ENCODE measurements at regions of chr16 and their contacts with region 1.

Region 1: GRCh38 chr16:67660564-67661028 is at the start of gene PARD6A:
- DNase-seq: peak; percentile 99
- H3K4me3 Mint-ChIP-seq: peak within 1 kb of the TSS; percentile 92
- H3K27ac Mint-ChIP-seq: peak within 1 kb of the TSS; percentile 96
- H3K4me1 Mint-ChIP-seq: peaks cover 23% of the 10 kb centered on the region
- H3K27me3 Mint-ChIP-seq: no peaks in the 10 kb centered on the region
- total RNA-seq, gene PARD6A: 13.5 and 14.0 TPM in 2 replicates

Region 2: GRCh38 chr16:67226804-67227557 is 433.6 kb before region 1 on chr16 and contains the start of gene TMEM208:
- intact Hi-C with region 1: loop called (anchors 2 kb)
- DNase-seq: peak; percentile 100
- H3K4me3 Mint-ChIP-seq: peak within 1 kb of the TSS; percentile 98
- H3K27ac Mint-ChIP-seq: peak within 1 kb of the TSS; percentile 98
- H3K4me1 Mint-ChIP-seq: peaks cover 43% of the 10 kb centered on the region
- H3K27me3 Mint-ChIP-seq: no peaks in the 10 kb centered on the region
- total RNA-seq, gene TMEM208: 65.0 and 65.6 TPM in 2 replicates

Region 3: GRCh38 chr16:67480833-67481560 is 179.6 kb before region 1 on chr16 and contains the start of gene ATP6V0D1:
- intact Hi-C with region 1: loop called (anchors 2 kb)
- DNase-seq: peak; percentile 100
- H3K4me3 Mint-ChIP-seq: peak within 1 kb of the TSS; percentile 100
- H3K27ac Mint-ChIP-seq: peak within 1 kb of the TSS; percentile 97
- H3K4me1 Mint-ChIP-seq: peaks cover 17% of the 10 kb centered on the region
- H3K27me3 Mint-ChIP-seq: no peaks in the 10 kb centered on the region
- total RNA-seq, gene ATP6V0D1: 30.9 and 31.8 TPM in 2 replicates

Region 4: GRCh38 chr16:67521095-67521804 is 139.3 kb before region 1 on chr16:
- intact Hi-C with region 1: loop called (anchors 2 kb)
- DNase-seq: peak; percentile 99
- H3K4me3 Mint-ChIP-seq: peak overlapping the region; percentile 89
- H3K27ac Mint-ChIP-seq: peak overlapping the region; percentile 100
- H3K4me1 Mint-ChIP-seq: peaks cover 30% of the 10 kb centered on the region
- H3K27me3 Mint-ChIP-seq: peaks cover 18% of the 10 kb centered on the region

Region 5: GRCh38 chr16:67645397-67646121 is 15.0 kb before region 1 on chr16:
- intact Hi-C with region 1: loop called (anchors 2 kb)
- DNase-seq: no peak
- H3K4me3 Mint-ChIP-seq: peak overlapping the region; percentile 88
- H3K27ac Mint-ChIP-seq: peak overlapping the region; percentile 88
- H3K4me1 Mint-ChIP-seq: peaks cover 17% of the 10 kb centered on the region
- H3K27me3 Mint-ChIP-seq: no peaks in the 10 kb centered on the region

Region 6: GRCh38 chr16:67841764-67842508 is 181.3 kb after region 1 on chr16 and contains the start of gene THAP11:
- intact Hi-C with region 1: loop called (anchors 2 kb)
- DNase-seq: peak; percentile 99
- H3K4me3 Mint-ChIP-seq: peak within 1 kb of the TSS; percentile 93
- H3K27ac Mint-ChIP-seq: peak within 1 kb of the TSS; percentile 94
- H3K4me1 Mint-ChIP-seq: peaks cover 26% of the 10 kb centered on the region
- H3K27me3 Mint-ChIP-seq: no peaks in the 10 kb centered on the region
- total RNA-seq, gene THAP11: 46.4 and 48.7 TPM in 2 replicates

Region 7: DNA sequence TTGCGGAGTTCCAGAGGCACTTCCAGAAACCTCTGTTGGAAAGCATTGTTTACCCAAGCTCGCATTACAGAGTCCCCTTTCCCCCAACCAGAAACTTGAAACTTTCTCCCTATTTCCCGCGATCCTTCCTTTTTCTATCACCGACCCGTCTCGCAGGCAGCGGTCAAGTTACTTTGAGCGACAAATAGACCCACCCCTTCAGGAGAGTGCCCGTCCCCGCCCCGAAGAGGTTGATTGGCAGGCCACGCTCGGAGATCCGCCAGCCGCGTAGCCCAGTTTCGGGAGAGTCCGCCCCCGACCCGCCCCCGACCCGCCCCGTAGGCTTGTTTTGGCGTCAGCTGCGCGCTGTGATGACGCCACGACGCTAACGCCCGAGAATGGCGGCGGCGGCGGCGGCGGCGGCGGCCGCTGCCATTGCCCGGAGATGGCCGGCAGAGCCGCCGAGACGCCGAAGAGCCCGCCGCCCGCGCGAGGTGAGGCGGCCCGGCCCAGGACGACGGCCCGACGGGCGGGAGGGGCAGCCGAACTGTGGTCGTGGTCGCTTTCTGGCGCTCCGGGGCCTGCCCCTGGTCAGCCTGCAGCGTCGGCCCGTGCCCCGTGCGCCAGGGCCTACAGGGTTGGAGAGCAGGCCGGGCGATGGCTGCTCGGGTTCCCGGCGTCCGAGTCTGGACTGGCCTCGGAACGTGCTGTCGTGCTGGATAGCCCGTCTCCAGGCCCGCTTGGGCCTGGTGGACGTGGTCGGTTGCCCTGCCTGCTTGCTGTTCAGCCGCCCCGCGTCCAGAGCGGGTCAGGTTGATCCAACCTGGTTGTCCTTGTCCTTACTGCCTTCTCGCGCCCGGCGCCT is 232.5 kb after region 1 on chr16 and contains the start of gene PSKH1:
- intact Hi-C with region 1: loop called (anchors 1 kb)
- DNase-seq: peak; percentile 97
- H3K4me3 Mint-ChIP-seq: peak within 1 kb of the TSS; percentile 97
- H3K27ac Mint-ChIP-seq: peak within 1 kb of the TSS; percentile 94
- H3K4me1 Mint-ChIP-seq: peaks cover 22% of the 10 kb centered on the region
- H3K27me3 Mint-ChIP-seq: no peaks in the 10 kb centered on the region
- total RNA-seq, gene PSKH1: 14.4 and 16.3 TPM in 2 replicates